ENCODE measurements at regions of chrX and their contacts with region 1.

Region 1: GRCh38 chrX:119118780-119119395 is 8.7 kb downstream of the KIAA1210 start:
- DNase-seq: no peak
- ATAC-seq: peak; percentile 46

Region 2: DNA sequence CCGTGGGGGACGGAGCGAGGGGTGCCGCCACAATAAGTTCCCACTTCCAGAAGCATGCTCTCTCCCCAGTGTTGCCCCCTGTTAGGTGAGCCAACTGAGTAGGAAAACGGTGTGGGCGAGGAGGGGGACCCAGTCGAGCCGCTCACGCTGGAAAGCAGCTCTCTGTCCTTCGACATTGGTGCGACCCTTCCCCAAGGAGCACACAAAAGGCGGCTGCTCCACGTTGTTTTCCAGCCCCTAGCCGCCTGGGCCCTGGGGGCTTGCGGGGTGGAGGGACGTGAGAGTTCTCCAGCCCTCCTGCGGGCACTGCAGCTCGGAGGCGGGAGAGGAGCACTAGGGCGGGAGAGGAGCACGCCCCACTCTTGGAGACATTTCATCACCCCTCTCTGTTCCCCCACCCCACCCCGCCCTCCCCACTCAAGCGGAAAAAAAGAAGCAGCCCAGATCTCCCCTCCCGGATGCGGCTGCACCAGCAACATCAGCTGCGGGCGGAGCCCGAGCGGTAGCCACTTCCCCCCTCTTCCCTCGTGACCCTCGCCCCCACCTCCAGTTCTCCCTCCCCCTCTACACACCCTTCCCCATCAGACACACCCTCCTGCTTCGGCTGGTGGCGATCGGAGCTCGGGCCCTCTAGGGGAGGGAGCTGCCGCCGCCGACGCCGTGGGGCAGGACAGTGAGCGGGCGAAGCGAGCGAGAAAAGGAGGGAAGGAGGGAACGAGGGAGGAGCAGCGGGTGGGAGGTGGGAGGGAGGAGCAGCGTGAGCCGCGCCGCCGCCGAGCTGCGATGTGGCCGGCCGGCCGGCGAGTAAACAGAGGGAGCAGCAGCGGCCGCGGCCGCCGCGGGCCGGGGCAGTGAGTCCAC is 623.6 kb before region 1 on chrX and contains the start of gene DOCK11:
- intact Hi-C with region 1: no loop called
- DNase-seq: peak; percentile 91
- ATAC-seq: peak; percentile 96
- total RNA-seq, gene DOCK11: 6.9 TPM

Region 3: DNA sequence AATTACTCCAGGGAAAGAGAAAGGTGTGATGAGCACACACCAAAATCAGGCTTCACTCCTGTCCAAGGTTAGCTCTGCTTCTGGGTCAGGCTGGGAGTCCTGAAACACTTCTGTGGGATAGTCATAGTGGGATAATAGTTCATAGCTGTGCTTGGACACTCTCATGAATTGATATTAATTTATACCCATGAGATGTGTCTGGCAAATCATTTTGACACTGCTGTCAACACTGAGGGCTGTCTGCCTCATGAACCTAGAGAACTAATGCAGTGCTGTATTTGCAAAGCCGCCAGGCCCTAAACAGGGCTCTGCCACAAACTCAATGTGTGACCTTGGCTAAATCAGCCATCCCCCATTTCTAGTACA is 92.7 kb after region 1 on chrX:
- intact Hi-C with region 1: loop called (anchors 10 kb)
- DNase-seq: no peak
- ATAC-seq: peak; percentile 95

Region 4: DNA sequence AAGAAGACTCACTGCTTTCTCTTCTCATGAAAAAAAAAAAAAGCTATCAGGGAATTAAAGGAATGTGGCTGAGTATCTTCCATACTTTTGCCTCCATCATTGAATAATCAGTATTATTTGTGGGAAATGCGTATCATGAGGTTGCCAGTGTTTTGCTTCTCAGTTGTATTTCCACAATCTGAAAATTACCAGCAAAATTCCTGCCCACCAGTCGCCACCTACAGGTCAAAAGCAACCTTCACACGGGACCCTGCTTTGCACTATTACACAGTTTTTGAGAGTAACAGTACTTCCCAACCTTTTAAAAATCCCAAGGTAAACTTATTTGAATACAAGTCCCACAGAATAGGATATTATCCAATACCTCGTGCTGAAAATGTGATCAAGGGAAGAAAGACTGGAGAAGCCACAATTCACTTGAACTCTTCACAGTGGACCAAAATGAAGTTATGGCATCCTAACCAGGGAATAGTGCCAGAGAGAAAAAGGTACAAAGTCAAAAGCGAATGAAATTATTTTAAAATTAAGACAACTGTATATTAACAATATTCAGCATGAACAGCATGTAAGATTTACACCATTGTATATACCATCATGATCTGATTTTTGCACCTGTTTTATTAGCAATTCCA is 147.6 kb after region 1 on chrX:
- intact Hi-C with region 1: loop called (anchors 5 kb)
- DNase-seq: no peak
- ATAC-seq: no peak